ENCODE measurements at regions of chr5 and their contacts with region 1.

Region 1: GRCh38 chr5:15995341-15996052 is 184.1 kb downstream of the MARCHF11 start:
- DNase-seq: peak in 1 of 2 experiments; percentile 48
- H3K4me3 ChIP-seq: no peak overlapping the region
- H3K27ac ChIP-seq: no peak overlapping the region
- H3K4me1 ChIP-seq: no peaks in the 10 kb centered on the region; a peak in 1 of 7 replicates
- H3K27me3 ChIP-seq: peaks cover 0 to 1% (median 0%) of the 10 kb centered on the region in 4 experiments; a peak in 1 of 7 replicates
- CTCF ChIP-seq: peak in 2 of 3 experiments; percentile 38 to 53; a peak in 3 of 4 replicates
- EP300 ChIP-seq: no peak
- POLR2A ChIP-seq: no peak
- RAD21 ChIP-seq: peak; percentile 78 to 80

Region 2: DNA sequence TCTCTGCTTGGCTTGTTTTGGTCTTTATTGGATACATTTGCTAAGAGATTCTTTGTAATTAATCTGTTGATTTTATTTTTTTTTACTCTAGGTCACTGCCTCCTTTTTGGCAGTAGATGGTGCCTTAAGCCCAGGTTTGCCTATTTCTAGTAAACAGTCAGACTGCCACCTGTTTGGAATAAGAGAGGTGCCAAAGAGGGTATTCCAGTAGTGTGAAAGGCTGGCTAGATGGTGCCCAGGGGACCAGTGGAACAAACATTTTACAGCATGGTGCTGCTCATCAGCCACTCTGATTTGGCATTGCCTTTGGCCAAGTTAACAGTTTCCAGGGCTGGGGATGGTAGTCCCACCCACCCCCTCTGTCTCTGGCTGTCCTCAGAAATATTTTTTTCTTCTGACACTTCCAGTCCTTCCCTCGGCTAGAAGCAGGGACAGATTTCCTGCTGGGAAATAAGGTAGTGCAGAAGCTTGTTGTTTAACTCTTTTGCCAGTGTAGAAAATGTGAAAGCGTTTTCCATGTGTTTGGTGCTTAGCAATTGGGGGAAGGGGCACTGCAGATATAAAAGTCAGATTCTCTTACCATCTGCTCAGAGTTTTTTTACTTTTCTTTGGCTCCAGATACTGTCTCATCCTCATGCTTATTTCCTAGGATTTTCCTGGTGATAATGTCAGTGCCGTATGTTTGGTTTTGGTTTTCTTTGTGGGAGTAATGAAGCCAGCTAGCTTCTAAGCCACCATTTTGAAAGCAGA is 532.1 kb before region 1 on chr5:
- CTCF ChIA-PET with region 1: interaction called, 17 read pairs
- POLR2A ChIA-PET with region 1: no interaction called
- DNase-seq: peak in 1 of 2 experiments; percentile 52
- H3K4me3 ChIP-seq: no peak overlapping the region
- H3K27ac ChIP-seq: no peak overlapping the region
- H3K4me1 ChIP-seq: no peaks in the 10 kb centered on the region; a peak in 1 of 7 replicates
- H3K27me3 ChIP-seq: no peaks in the 10 kb centered on the region
- CTCF ChIP-seq: peak in 2 of 3 experiments; percentile 61 to 80; a peak in 3 of 4 replicates
- EP300 ChIP-seq: no peak
- POLR2A ChIP-seq: no peak
- RAD21 ChIP-seq: peak; percentile 96 to 97

Region 3: GRCh38 chr5:15472116-15472515 is 523.4 kb before region 1 on chr5:
- CTCF ChIA-PET with region 1: interaction called, 19 read pairs
- POLR2A ChIA-PET with region 1: no interaction called
- DNase-seq: peak in 1 of 2 experiments; percentile 61
- H3K4me3 ChIP-seq: no peak overlapping the region
- H3K27ac ChIP-seq: no peak overlapping the region
- H3K4me1 ChIP-seq: no peaks in the 10 kb centered on the region
- H3K27me3 ChIP-seq: no peaks in the 10 kb centered on the region
- CTCF ChIP-seq: peak; percentile 22 to 51 (median 44)
- EP300 ChIP-seq: no peak
- POLR2A ChIP-seq: no peak
- RAD21 ChIP-seq: peak; percentile 48 to 63

Region 4: GRCh38 chr5:15983392-15983791 is 12.1 kb before region 1 on chr5:
- CTCF ChIA-PET with region 1: interaction called, 15 read pairs
- POLR2A ChIA-PET with region 1: no interaction called
- DNase-seq: no peak
- H3K4me3 ChIP-seq: no peak overlapping the region
- H3K27ac ChIP-seq: no peak overlapping the region
- H3K4me1 ChIP-seq: no peaks in the 10 kb centered on the region
- H3K27me3 ChIP-seq: no peaks in the 10 kb centered on the region; a peak in 1 of 7 replicates
- CTCF ChIP-seq: no peak
- EP300 ChIP-seq: no peak
- POLR2A ChIP-seq: no peak
- RAD21 ChIP-seq: no peak

Region 5: GRCh38 chr5:16013334-16014065 is 18.0 kb after region 1 on chr5:
- CTCF ChIA-PET with region 1: interaction called, 27 read pairs
- POLR2A ChIA-PET with region 1: no interaction called
- DNase-seq: no peak
- H3K4me3 ChIP-seq: no peak overlapping the region
- H3K27ac ChIP-seq: no peak overlapping the region
- H3K4me1 ChIP-seq: no peaks in the 10 kb centered on the region
- H3K27me3 ChIP-seq: no peaks in the 10 kb centered on the region
- CTCF ChIP-seq: no peak
- EP300 ChIP-seq: no peak
- POLR2A ChIP-seq: no peak
- RAD21 ChIP-seq: no peak

Region 6: DNA sequence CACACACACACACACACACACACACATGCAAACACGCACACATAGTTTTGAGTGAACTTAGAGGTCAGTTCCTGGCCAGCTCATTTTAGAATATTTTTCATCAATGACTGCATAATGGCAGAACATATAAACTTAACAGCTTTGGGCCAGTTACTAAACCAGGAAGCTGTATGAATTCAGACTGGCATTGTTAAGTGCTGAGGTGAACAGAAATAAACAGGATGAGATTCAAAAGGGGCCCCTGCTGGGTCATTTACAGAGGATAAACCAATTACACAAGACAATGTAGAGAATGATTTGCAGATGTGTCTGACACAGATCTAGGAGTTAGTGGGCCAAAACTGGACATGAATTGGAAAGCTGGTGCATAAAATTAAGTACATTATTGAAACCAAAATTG is 139.5 kb after region 1 on chr5:
- CTCF ChIA-PET with region 1: no interaction called
- POLR2A ChIA-PET with region 1: no interaction called
- DNase-seq: no peak
- H3K4me3 ChIP-seq: no peak overlapping the region
- H3K27ac ChIP-seq: no peak overlapping the region
- H3K4me1 ChIP-seq: no peaks in the 10 kb centered on the region
- H3K27me3 ChIP-seq: no peaks in the 10 kb centered on the region
- CTCF ChIP-seq: no peak
- EP300 ChIP-seq: no peak
- POLR2A ChIP-seq: no peak
- RAD21 ChIP-seq: no peak

Measured in H1 (cell line).